ENCODE measurements at regions of chr10 and their contacts with region 1.

Region 1: GRCh38 chr10:121886997-121887622 is 40.7 kb downstream of the ATE1 start:
- H3K4me3 Mint-ChIP-seq: no peak overlapping the region
- H3K27ac Mint-ChIP-seq: no peak overlapping the region
- H3K4me1 Mint-ChIP-seq: no peaks in the 10 kb centered on the region
- H3K27me3 Mint-ChIP-seq: no peaks in the 10 kb centered on the region

Region 2: GRCh38 chr10:121781101-121781500 is 106.0 kb before region 1 on chr10:
- intact Hi-C with region 1: no loop called
- H3K4me3 Mint-ChIP-seq: no peak overlapping the region
- H3K27ac Mint-ChIP-seq: no peak overlapping the region
- H3K4me1 Mint-ChIP-seq: no peaks in the 10 kb centered on the region
- H3K27me3 Mint-ChIP-seq: no peaks in the 10 kb centered on the region

Region 3: GRCh38 chr10:121823993-121824463 is 63.1 kb before region 1 on chr10:
- intact Hi-C with region 1: loop called (anchors 10 kb)
- H3K4me3 Mint-ChIP-seq: no peak overlapping the region
- H3K27ac Mint-ChIP-seq: no peak overlapping the region
- H3K4me1 Mint-ChIP-seq: peaks cover 5% of the 10 kb centered on the region
- H3K27me3 Mint-ChIP-seq: no peaks in the 10 kb centered on the region

Region 4: GRCh38 chr10:121942749-121943416 is 55.8 kb after region 1 on chr10:
- intact Hi-C with region 1: no loop called
- H3K4me3 Mint-ChIP-seq: no peak overlapping the region
- H3K27ac Mint-ChIP-seq: no peak overlapping the region
- H3K4me1 Mint-ChIP-seq: peaks cover 12% of the 10 kb centered on the region
- H3K27me3 Mint-ChIP-seq: no peaks in the 10 kb centered on the region

Measured in dendritic cell treated with granulocyte-macrophage colony-stimulating factor and Interleukin-4, amounts not matched to agents 40 ng/mL and 50 ng/mL, for 4 days (primary cell).